Naive thymus-derived CD4-positive, alpha-beta T cell (primary cell): ENCODE measurements at regions of chr13 and their contacts with region 1.

Region 1: GRCh38 chr13:62278271-62278670 is 862.6 kb upstream of the PCDH20 start:
- DNase-seq: no peak
- ATAC-seq: no peak
- H3K4me3 ChIP-seq: no peak overlapping the region
- H3K4me3 Mint-ChIP-seq: no peak overlapping the region
- H3K27ac ChIP-seq: no peak overlapping the region
- H3K27ac Mint-ChIP-seq: no peak overlapping the region
- H3K4me1 ChIP-seq: no peaks in the 10 kb centered on the region
- H3K4me1 Mint-ChIP-seq: no peaks in the 10 kb centered on the region
- H3K27me3 ChIP-seq: no peaks in the 10 kb centered on the region
- H3K27me3 Mint-ChIP-seq: no peaks in the 10 kb centered on the region

Region 2: DNA sequence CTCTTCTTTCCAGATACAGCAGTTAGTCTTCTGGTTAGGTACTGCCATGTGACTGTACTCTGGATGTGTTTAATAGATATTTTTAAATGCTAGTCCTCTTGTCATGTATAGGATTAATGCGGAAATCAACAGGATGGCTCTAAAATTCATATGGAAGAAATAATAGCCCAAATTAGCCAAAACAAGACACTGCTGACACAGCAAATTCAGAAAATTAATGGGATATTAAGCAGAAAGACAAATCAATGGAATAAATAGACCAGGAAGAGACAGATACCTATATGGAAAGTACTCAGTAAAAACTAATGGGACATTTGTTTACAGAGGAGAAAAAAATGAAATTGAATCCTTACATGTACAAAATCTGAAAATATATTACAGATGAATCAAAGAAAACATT is 183.3 kb before region 1 on chr13:
- CTCF ChIA-PET with region 1: no interaction called
- POLR2A ChIA-PET with region 1: no interaction called
- intact Hi-C with region 1: loop called in 1 of 2 experiments (anchors 5 kb)
- DNase-seq: no peak
- ATAC-seq: no peak
- H3K4me3 ChIP-seq: no peak overlapping the region
- H3K4me3 Mint-ChIP-seq: no peak overlapping the region
- H3K27ac ChIP-seq: no peak overlapping the region
- H3K27ac Mint-ChIP-seq: no peak overlapping the region
- H3K4me1 ChIP-seq: no peaks in the 10 kb centered on the region
- H3K4me1 Mint-ChIP-seq: no peaks in the 10 kb centered on the region
- H3K27me3 ChIP-seq: no peaks in the 10 kb centered on the region
- H3K27me3 Mint-ChIP-seq: no peaks in the 10 kb centered on the region